A549 (cell line): ENCODE measurements at regions of chr16 and their contacts with region 1.

Region 1: GRCh38 chr16:89308390-89309333 is 91.2 kb downstream of the ZNF778 start:
- DNase-seq: no peak
- ATAC-seq: peak in 1 of 2 experiments; percentile 48; a peak in 2 of 6 replicates
- H3K4me3 ChIP-seq: no peak overlapping the region
- H3K27ac ChIP-seq: 0 out of 6 replicates have a peak overlapping the region, but pooled peaks of 1 of the 2 experiments have one; percentile 6
- H3K4me1 ChIP-seq: peaks cover 7% of the 10 kb centered on the region; the same call in 2 of the 3 replicates
- CTCF ChIP-seq: peak; percentile 25; the same call in 2 of the 3 replicates
- EP300 ChIP-seq: no peak
- POLR2A ChIP-seq: no peak
- RAD21 ChIP-seq: peak in 1 of 2 experiments; percentile 26; a peak in 1 of 5 replicates

Region 2: GRCh38 chr16:89256651-89257254 is 51.9 kb before region 1 on chr16:
- CTCF ChIA-PET with region 1: no interaction called
- POLR2A ChIA-PET with region 1: no interaction called
- DNase-seq: peak in 1 of 2 experiments; percentile 48
- ATAC-seq: peak; percentile 58 to 70
- H3K4me3 ChIP-seq: no peak overlapping the region; the same call in 2 of the 3 replicates
- H3K27ac ChIP-seq: peak overlapping the region; percentile 19 to 74; a peak in 2 of 6 replicates
- H3K4me1 ChIP-seq: peaks cover 10% of the 10 kb centered on the region; the same call in 2 of the 3 replicates
- CTCF ChIP-seq: no peak
- EP300 ChIP-seq: no peak
- POLR2A ChIP-seq: no peak
- RAD21 ChIP-seq: no peak

Region 3: DNA sequence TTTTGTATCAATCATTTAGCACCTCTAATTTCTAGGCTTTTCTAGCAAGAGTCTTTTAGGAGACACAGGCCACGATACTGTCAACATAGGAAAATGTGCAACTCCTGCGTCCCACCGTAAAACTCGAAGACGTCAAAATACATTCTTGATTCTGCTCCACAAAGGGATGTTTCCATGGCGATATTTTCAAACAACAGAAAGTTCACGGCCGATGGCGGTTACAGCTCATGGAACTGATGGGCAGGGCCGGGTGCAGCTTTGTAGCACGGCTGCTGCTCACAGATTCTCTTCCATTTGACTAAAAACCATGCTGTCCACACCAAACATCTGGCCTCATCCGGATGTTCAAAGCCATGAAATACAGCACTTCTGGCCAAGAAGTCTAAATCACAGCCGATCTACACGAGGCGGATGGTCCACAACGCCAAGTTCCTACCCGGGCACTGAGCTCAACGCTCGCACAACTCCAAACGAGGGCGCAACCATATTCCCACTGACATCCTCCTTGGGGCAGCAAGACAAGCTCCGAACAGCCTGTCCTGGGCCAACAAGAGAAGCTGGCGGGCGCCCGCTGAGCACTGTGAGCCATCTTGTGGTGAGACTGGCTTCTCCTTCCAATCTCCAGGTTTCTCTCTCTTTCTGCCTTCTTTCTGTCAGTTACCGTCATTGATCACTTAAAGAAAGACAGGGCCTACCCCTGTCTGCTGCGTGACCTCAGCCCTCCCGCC is 11.3 kb before region 1 on chr16:
- CTCF ChIA-PET with region 1: interaction called, 52 read pairs
- POLR2A ChIA-PET with region 1: interaction called, 6 read pairs
- DNase-seq: no peak
- ATAC-seq: no peak
- H3K4me3 ChIP-seq: no peak overlapping the region
- H3K27ac ChIP-seq: peak overlapping the region in 1 of 2 experiments; percentile 40; a peak in 2 of 6 replicates
- H3K4me1 ChIP-seq: peaks cover 39% of the 10 kb centered on the region
- CTCF ChIP-seq: no peak
- EP300 ChIP-seq: no peak
- POLR2A ChIP-seq: no peak
- RAD21 ChIP-seq: no peak

Region 4: DNA sequence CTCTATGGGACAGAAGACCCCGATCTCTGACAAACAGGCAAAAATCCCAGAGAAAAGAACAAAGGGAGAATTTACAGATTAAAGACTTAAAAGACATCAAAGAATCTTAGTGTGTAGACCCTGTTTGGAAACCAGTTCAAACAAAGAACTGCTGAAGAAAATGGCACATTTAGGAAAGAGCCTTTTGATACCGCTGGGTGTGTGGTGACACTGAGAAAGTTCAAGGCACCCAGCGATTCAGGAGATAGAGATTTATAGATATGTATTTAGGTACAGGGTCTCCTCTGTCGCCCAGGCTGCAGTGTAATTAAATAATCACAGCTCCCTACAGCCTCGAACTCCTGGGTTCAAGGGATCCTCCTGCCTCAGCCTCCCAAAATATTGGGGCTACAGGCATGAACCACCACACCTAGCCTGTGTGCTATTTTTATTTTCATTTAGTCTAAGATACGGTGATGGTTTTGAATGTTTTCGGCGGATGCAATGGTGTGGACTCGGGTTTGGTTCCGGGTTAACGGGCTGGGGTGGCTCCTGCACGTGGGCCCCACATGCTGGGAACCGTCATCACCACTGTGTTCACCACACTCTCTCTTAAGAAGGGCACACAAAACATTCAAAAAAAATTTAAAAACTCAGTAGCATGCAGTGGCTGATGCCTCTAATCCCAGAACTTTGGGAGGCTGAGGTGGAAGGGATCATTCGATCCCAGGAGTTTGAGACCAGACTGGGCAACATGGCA is 22.9 kb after region 1 on chr16:
- CTCF ChIA-PET with region 1: no interaction called
- POLR2A ChIA-PET with region 1: no interaction called
- DNase-seq: no peak
- ATAC-seq: no peak
- H3K4me3 ChIP-seq: no peak overlapping the region
- H3K27ac ChIP-seq: peak overlapping the region; percentile 86 to 98; a peak in 5 of 6 replicates
- H3K4me1 ChIP-seq: peaks cover 83% of the 10 kb centered on the region
- CTCF ChIP-seq: no peak
- EP300 ChIP-seq: no peak
- POLR2A ChIP-seq: no peak
- RAD21 ChIP-seq: no peak